ENCODE measurements at regions of chr17 and their contacts with region 1.

Region 1: GRCh38 chr17:28765038-28765437 is 21.2 kb downstream of the TRAF4 start:
- DNase-seq: no peak
- ATAC-seq: no peak
- H3K4me3 ChIP-seq: no peak overlapping the region
- H3K27ac ChIP-seq: no peak overlapping the region
- H3K4me1 ChIP-seq: peaks cover 16% of the 10 kb centered on the region
- H3K27me3 ChIP-seq: no peaks in the 10 kb centered on the region
- CTCF ChIP-seq: no peak
- POLR2A ChIP-seq: no peak

Region 2: GRCh38 chr17:28908640-28909167 is 143.7 kb after region 1 on chr17:
- intact Hi-C with region 1: loop called (anchors 5 kb)
- DNase-seq: no peak
- ATAC-seq: no peak
- H3K4me3 ChIP-seq: no peak overlapping the region
- H3K27ac ChIP-seq: no peak overlapping the region
- H3K4me1 ChIP-seq: peaks cover 2% of the 10 kb centered on the region
- H3K27me3 ChIP-seq: no peaks in the 10 kb centered on the region
- CTCF ChIP-seq: no peak
- POLR2A ChIP-seq: no peak

Measured in body of pancreas (tissue), 4 donors.